CD8-positive, alpha-beta T cell (primary cell): ENCODE measurements at regions of chr1 and their contacts with region 1.

Region 1: DNA sequence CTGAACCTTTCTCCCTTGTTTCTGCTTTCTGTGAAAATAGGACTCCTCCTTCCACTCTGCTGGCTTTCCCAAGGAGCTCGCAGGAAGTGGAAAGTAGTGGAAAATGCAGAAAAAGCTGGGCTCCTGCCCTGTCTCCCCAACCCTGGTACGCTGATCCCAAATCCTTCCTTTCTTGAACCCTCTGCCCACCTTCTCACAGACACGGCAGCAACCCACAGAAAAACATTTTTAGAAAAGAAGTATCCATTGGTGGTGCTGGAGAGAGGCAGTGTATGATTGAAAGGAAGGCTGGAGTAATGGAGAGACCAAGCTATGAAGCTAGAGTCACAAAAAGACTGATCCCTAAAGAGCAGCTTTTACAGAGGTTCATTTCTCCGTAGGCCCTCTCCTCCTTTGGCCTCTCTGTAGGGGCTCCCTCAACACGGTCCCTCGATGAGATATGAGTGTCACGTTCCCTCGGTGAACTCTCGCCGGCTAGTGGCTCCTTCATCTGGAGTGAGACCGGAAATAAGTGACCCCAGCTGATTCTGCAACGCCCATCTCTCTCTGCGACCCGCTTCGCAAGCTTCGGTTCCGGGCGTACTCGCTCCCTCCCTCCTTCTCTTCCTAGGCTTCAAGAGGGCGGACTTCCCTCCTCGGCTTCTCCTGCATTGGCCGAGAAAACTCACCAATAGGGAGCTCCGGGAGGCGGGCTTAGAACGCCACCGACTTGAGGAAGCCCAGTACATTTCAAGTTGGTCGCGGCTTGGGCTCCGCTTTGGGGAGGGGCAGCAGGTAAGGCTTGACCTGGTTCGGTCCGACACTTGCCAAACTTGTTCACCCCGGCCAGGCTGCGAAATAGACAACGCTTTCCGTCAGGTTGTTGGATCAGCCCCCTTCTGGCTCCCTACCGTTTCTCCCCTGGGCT is at the starts of genes ANKRD34A and POLR3GL:
- DNase-seq: peak; percentile 77 to 95 (median 91)
- ATAC-seq: peak; percentile 88
- H3K4me3 ChIP-seq: peak within 1 kb of the TSS; percentile 87 to 92
- H3K4me3 Mint-ChIP-seq: peak within 1 kb of the TSS; percentile 98
- H3K27ac ChIP-seq: peak within 1 kb of the TSS; percentile 71 to 78
- H3K27ac Mint-ChIP-seq: peak within 1 kb of the TSS; percentile 98
- H3K4me1 ChIP-seq: peaks cover 32% of the 10 kb centered on the region
- H3K4me1 Mint-ChIP-seq: peaks cover 58% of the 10 kb centered on the region
- H3K27me3 ChIP-seq: no peaks in the 10 kb centered on the region
- H3K27me3 Mint-ChIP-seq: no peaks in the 10 kb centered on the region
- CTCF ChIP-seq: no peak
- total RNA-seq, gene ANKRD34A: 0.42 to 0.62 TPM
- total RNA-seq, gene POLR3GL: 12.9 to 14.4 TPM

Region 2: GRCh38 chr1:145918144-145918992 is 45.9 kb before region 1 on chr1 and contains the start of gene PEX11B:
- CTCF ChIA-PET with region 1: interaction called, 3 read pairs
- POLR2A ChIA-PET with region 1: interaction called, 26 read pairs
- intact Hi-C with region 1: loop called (anchors 1 to 2 kb)
- DNase-seq: peak; percentile 87 to 96 (median 93)
- ATAC-seq: peak; percentile 91
- H3K4me3 ChIP-seq: peak within 1 kb of the TSS; percentile 88 to 96
- H3K4me3 Mint-ChIP-seq: peak within 1 kb of the TSS; percentile 90
- H3K27ac ChIP-seq: peak within 1 kb of the TSS; percentile 74 to 86
- H3K27ac Mint-ChIP-seq: peak within 1 kb of the TSS; percentile 96
- H3K4me1 ChIP-seq: peaks cover 24% of the 10 kb centered on the region
- H3K4me1 Mint-ChIP-seq: peaks cover 43% of the 10 kb centered on the region
- H3K27me3 ChIP-seq: no peaks in the 10 kb centered on the region
- H3K27me3 Mint-ChIP-seq: no peaks in the 10 kb centered on the region
- CTCF ChIP-seq: no peak
- total RNA-seq, gene PEX11B: 11.8 TPM

Region 3: DNA sequence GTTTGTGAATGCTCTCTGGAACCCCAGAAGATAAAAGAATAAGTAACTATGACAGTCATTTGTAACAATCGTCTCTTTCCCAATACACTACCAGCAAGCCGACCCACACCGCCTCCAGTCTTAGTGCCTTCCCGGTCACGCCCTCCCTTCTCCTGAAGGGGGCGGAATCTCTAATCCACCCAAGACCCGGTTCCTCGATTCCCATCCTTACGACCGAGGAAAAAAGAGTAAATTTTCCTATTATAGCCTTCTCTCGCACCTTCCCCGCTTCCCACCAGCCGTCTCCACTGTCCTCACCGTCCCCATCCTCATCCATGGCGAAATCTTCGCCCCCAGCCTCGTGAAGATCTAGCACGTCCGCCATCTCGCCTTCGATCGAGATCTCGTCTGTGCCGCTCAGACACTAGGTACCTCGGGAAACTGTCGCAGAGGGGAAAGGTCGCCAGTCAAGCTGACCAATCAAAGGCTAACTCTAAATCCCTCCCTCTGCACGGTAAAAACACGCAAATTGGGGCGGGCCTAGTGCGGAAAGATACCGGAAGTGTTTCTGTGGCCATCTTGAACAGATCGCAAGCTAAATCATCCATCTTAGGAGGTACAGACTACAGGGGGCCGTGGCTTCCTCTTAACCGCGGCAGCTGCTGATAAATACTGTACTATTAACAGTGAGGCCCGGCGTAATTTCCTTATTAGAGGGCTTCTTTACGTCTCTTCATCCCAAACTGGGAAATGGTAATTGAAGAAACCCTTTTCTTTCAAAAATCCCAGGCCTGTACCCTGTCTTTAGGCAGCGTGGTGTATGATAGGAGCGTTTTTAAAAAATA is 37.0 kb before region 1 on chr1 and contains the start of gene RBM8A:
- CTCF ChIA-PET with region 1: interaction called, 20 read pairs
- POLR2A ChIA-PET with region 1: interaction called, 63 read pairs
- intact Hi-C with region 1: loop called (anchors 1 kb)
- DNase-seq: peak; percentile 85 to 99 (median 94)
- ATAC-seq: peak; percentile 96
- H3K4me3 ChIP-seq: peak within 1 kb of the TSS; percentile 86 to 91
- H3K4me3 Mint-ChIP-seq: no peak within 1 kb of the TSS
- H3K27ac ChIP-seq: peak within 1 kb of the TSS; percentile 89 to 95
- H3K27ac Mint-ChIP-seq: peak within 1 kb of the TSS; percentile 91
- H3K4me1 ChIP-seq: peaks cover 22% of the 10 kb centered on the region
- H3K4me1 Mint-ChIP-seq: peaks cover 20% of the 10 kb centered on the region
- H3K27me3 ChIP-seq: no peaks in the 10 kb centered on the region
- H3K27me3 Mint-ChIP-seq: no peaks in the 10 kb centered on the region
- CTCF ChIP-seq: peak; percentile 60
- total RNA-seq, gene RBM8A: 180 to 187 TPM

Region 4: GRCh38 chr1:145951526-145951925 is 12.7 kb before region 1 on chr1:
- CTCF ChIA-PET with region 1: interaction called, 7 read pairs
- POLR2A ChIA-PET with region 1: interaction called, 4 read pairs
- intact Hi-C with region 1: loop called in 1 of 2 experiments (anchors 1 kb)
- DNase-seq: no peak
- ATAC-seq: no peak
- H3K4me3 ChIP-seq: no peak overlapping the region
- H3K4me3 Mint-ChIP-seq: no peak overlapping the region
- H3K27ac ChIP-seq: no peak overlapping the region
- H3K27ac Mint-ChIP-seq: no peak overlapping the region
- H3K4me1 ChIP-seq: peaks cover 39% of the 10 kb centered on the region
- H3K4me1 Mint-ChIP-seq: peaks cover 70% of the 10 kb centered on the region
- H3K27me3 ChIP-seq: no peaks in the 10 kb centered on the region
- H3K27me3 Mint-ChIP-seq: no peaks in the 10 kb centered on the region
- CTCF ChIP-seq: no peak